GM12878 (cell line): ENCODE measurements at regions of chr13 and their contacts with region 1.

Region 1: GRCh38 chr13:50561739-50562138 is 281.8 kb downstream of the DLEU7 start:
- DNase-seq: no peak
- ATAC-seq: no peak
- H3K4me3 ChIP-seq: no peak overlapping the region
- H3K27ac ChIP-seq: no peak overlapping the region
- H3K4me1 ChIP-seq: no peaks in the 10 kb centered on the region
- H3K27me3 ChIP-seq: no peaks in the 10 kb centered on the region
- CTCF ChIP-seq: no peak
- EP300 ChIP-seq: no peak
- POLR2A ChIP-seq: no peak
- RAD21 ChIP-seq: no peak

Region 2: GRCh38 chr13:50626101-50626547 is 64.4 kb after region 1 on chr13:
- CTCF ChIA-PET with region 1: no interaction called
- POLR2A ChIA-PET with region 1: no interaction called
- RAD21 ChIA-PET with region 1: no interaction called
- SMC1A ChIA-PET with region 1: interaction called, 3 read pairs
- in situ Hi-C with region 1: no loop called
- intact Hi-C with region 1: loop called (anchors 10 kb)
- DNase-seq: no peak
- ATAC-seq: no peak
- H3K4me3 ChIP-seq: no peak overlapping the region
- H3K27ac ChIP-seq: no peak overlapping the region
- H3K4me1 ChIP-seq: no peaks in the 10 kb centered on the region
- H3K27me3 ChIP-seq: no peaks in the 10 kb centered on the region
- CTCF ChIP-seq: no peak
- EP300 ChIP-seq: no peak
- POLR2A ChIP-seq: no peak
- RAD21 ChIP-seq: no peak